IMR-90 (cell line): ENCODE measurements at regions of chr5 and their contacts with region 1.

Region 1: GRCh38 chr5:131196331-131196730 is 25.6 kb downstream of the LYRM7 start:
- DNase-seq: peak; percentile 55
- ATAC-seq: no peak
- H3K4me3 ChIP-seq: no peak overlapping the region
- H3K27ac ChIP-seq: no peak overlapping the region
- H3K4me1 ChIP-seq: no peaks in the 10 kb centered on the region
- H3K27me3 ChIP-seq: no peaks in the 10 kb centered on the region
- CTCF ChIP-seq: no peak
- POLR2A ChIP-seq: no peak
- RAD21 ChIP-seq: no peak

Region 2: GRCh38 chr5:130488252-130488651 is 708.1 kb before region 1 on chr5:
- CTCF ChIA-PET with region 1: no interaction called
- POLR2A ChIA-PET with region 1: no interaction called
- dilution Hi-C with region 1: no loop called
- in situ Hi-C with region 1: no loop called
- intact Hi-C with region 1: no loop called
- DNase-seq: no peak
- ATAC-seq: no peak
- H3K4me3 ChIP-seq: no peak overlapping the region
- H3K27ac ChIP-seq: no peak overlapping the region
- H3K4me1 ChIP-seq: no peaks in the 10 kb centered on the region
- H3K27me3 ChIP-seq: no peaks in the 10 kb centered on the region
- CTCF ChIP-seq: no peak
- POLR2A ChIP-seq: no peak
- RAD21 ChIP-seq: no peak

Region 3: GRCh38 chr5:130923543-130924124 is 272.7 kb before region 1 on chr5:
- CTCF ChIA-PET with region 1: no interaction called
- POLR2A ChIA-PET with region 1: no interaction called
- dilution Hi-C with region 1: no loop called
- in situ Hi-C with region 1: no loop called
- intact Hi-C with region 1: no loop called
- DNase-seq: no peak
- ATAC-seq: no peak
- H3K4me3 ChIP-seq: no peak overlapping the region
- H3K27ac ChIP-seq: no peak overlapping the region
- H3K4me1 ChIP-seq: no peaks in the 10 kb centered on the region
- H3K27me3 ChIP-seq: no peaks in the 10 kb centered on the region
- CTCF ChIP-seq: no peak
- POLR2A ChIP-seq: no peak
- RAD21 ChIP-seq: no peak

Region 4: GRCh38 chr5:131019111-131019974 is 177.0 kb before region 1 on chr5:
- CTCF ChIA-PET with region 1: no interaction called
- POLR2A ChIA-PET with region 1: no interaction called
- dilution Hi-C with region 1: no loop called
- in situ Hi-C with region 1: no loop called
- intact Hi-C with region 1: no loop called
- DNase-seq: no peak
- ATAC-seq: no peak
- H3K4me3 ChIP-seq: no peak overlapping the region
- H3K27ac ChIP-seq: no peak overlapping the region
- H3K4me1 ChIP-seq: no peaks in the 10 kb centered on the region
- H3K27me3 ChIP-seq: no peaks in the 10 kb centered on the region
- CTCF ChIP-seq: no peak
- POLR2A ChIP-seq: no peak
- RAD21 ChIP-seq: no peak

Region 5: GRCh38 chr5:131180407-131180806 is 15.9 kb before region 1 on chr5:
- CTCF ChIA-PET with region 1: no interaction called
- POLR2A ChIA-PET with region 1: no interaction called
- dilution Hi-C with region 1: no loop called
- in situ Hi-C with region 1: no loop called
- intact Hi-C with region 1: no loop called
- DNase-seq: no peak
- ATAC-seq: no peak
- H3K4me3 ChIP-seq: no peak overlapping the region
- H3K27ac ChIP-seq: no peak overlapping the region
- H3K4me1 ChIP-seq: no peaks in the 10 kb centered on the region
- H3K27me3 ChIP-seq: no peaks in the 10 kb centered on the region
- CTCF ChIP-seq: no peak
- POLR2A ChIP-seq: no peak
- RAD21 ChIP-seq: no peak

Region 6: DNA sequence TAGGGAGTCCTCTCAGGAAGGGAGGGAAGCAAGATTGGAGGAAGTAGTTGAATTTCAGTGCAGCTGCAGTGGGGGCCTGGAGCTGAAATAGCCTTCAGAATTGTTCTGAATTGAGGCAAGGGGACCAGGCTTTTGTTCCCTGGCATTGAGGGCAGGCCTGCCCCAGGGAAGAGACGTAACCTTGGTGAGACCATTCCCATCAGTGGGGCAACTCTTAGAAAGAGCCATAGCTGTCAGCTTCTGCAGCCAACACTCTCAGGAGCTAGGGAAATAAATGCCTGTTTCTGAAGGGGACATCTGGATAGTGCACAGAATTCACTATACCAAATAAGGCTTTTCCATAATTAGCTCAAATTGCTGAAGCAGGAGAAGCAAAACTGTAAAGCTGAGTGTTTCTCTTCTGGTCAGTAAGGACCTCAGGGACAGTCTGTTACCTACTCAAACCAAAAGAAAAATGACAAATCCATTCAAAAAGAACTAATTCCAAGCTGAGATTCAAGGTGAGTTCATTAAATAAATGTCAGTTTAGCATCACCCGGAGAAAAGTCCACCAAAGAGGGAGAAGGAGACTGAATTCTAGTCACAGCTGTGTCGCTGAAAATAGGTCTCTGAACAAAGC is 18.4 kb after region 1 on chr5:
- CTCF ChIA-PET with region 1: interaction called, 3 read pairs
- POLR2A ChIA-PET with region 1: no interaction called
- dilution Hi-C with region 1: no loop called
- in situ Hi-C with region 1: no loop called
- intact Hi-C with region 1: loop called (anchors 2 kb)
- DNase-seq: no peak
- ATAC-seq: no peak
- H3K4me3 ChIP-seq: no peak overlapping the region
- H3K27ac ChIP-seq: no peak overlapping the region
- H3K4me1 ChIP-seq: peaks cover 5% of the 10 kb centered on the region
- H3K27me3 ChIP-seq: no peaks in the 10 kb centered on the region
- CTCF ChIP-seq: no peak
- POLR2A ChIP-seq: no peak
- RAD21 ChIP-seq: no peak